ENCODE measurements at regions of chr14 and their contacts with region 1.

Region 1: DNA sequence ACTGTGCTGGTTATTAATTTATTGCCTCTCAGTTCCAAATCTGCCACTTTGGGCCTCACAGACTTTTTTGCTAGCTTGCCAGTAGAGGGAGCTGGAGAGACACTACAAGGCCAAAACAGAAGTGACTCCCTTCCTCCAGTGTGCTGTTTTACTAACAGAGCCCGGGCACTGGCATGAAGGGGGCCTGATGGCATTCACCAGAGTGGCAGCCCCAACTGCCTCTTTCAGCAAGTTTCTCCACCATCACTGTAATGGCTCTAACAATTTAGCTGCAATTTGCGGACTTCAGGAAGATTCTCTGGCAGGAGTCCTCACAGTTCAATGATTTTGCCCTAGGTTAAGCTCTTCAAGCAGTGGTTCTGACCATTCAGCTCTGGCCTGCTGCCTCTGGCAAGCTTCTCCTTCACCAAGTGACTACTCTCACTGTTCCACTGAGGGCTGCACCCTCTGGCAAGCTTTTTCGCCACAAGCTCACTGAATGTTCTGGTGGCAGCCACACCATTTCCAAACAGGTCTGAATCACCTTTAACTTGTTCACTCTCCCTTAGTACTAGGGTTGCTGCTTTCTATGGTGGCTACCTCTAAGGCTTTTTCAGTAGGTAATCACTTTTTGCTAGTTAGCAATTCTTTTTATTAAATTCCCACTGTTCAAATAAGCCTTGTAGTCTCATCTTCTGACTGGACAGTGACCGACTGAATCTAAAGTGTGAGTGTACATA is 104.9 kb downstream of the ZC3H14 start:
- DNase-seq: peak; percentile 64 to 72
- H3K4me3 ChIP-seq: no peak overlapping the region
- H3K4me1 ChIP-seq: no peaks in the 10 kb centered on the region
- H3K27me3 ChIP-seq: no peaks in the 10 kb centered on the region

Region 2: GRCh38 chr14:88584451-88584850 is 83.3 kb before region 1 on chr14:
- in situ Hi-C with region 1: no loop called
- DNase-seq: no peak
- H3K4me3 ChIP-seq: no peak overlapping the region
- H3K4me1 ChIP-seq: peaks cover 2% of the 10 kb centered on the region; the same call in 1 of the 2 replicates
- H3K27me3 ChIP-seq: no peaks in the 10 kb centered on the region

Region 3: DNA sequence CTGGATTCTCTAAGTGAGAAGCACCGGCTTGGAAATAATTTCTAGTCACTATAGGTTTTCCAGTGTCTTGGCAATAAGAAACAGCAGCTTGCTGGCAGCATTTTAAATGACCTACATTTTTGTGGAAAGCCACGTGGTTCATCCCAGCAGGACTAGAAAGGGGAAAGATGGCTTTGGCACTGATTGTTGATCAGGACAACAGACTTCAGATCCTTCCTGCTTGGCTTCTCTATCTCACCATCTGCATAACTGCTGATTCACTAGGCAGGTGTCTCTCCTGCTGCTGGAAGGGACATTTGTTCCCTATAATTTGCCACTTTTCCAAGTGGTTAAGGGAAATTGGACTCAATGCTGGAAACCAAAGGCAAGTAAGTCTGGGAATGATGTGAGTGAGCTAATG is 287.7 kb after region 1 on chr14:
- in situ Hi-C with region 1: no loop called
- DNase-seq: no peak
- H3K4me3 ChIP-seq: no peak overlapping the region
- H3K4me1 ChIP-seq: no peaks in the 10 kb centered on the region
- H3K27me3 ChIP-seq: no peaks in the 10 kb centered on the region

Region 4: DNA sequence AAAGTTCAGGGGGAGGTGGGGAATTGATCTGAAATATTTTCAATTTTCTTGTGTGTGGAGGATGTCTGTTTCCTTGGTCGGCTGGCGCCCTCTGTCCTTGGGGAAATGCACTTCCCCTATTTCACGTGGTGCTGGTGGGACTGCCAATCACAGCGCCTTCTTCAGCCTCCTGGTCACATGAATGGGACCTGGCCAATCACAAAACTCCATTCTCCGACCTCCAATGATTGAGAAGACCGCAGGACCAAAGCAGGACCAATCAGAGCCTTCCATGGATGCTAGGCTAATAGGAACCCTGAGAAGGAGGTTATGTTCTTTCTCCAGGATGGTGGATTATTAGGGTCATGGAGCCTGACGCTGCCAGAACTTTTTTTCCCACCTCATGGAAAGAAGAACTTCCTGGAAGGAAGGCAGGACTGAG is 345.4 kb after region 1 on chr14:
- in situ Hi-C with region 1: loop called (anchors 10 kb)
- DNase-seq: peak in 1 of 2 experiments; percentile 59
- H3K4me3 ChIP-seq: no peak overlapping the region
- H3K4me1 ChIP-seq: no peaks in the 10 kb centered on the region
- H3K27me3 ChIP-seq: no peaks in the 10 kb centered on the region